PC-9 (cell line): ENCODE measurements at regions of chr2 and their contacts with region 1.

Region 1: GRCh38 chr2:96509114-96509846 is 4.1 kb upstream of the NEURL3 start:
- DNase-seq: peak; percentile 82 to 94
- H3K4me3 ChIP-seq: no peak overlapping the region
- H3K27ac ChIP-seq: no peak overlapping the region
- H3K4me1 ChIP-seq: peaks cover 40% of the 10 kb centered on the region
- H3K27me3 ChIP-seq: no peaks in the 10 kb centered on the region
- CTCF ChIP-seq: peak; percentile 100

Region 2: GRCh38 chr2:96208143-96209010 is 300.9 kb before region 1 on chr2 and contains the start of gene STARD7:
- CTCF ChIA-PET with region 1: no interaction called
- POLR2A ChIA-PET with region 1: no interaction called
- intact Hi-C with region 1: loop called (anchors 10 kb)
- DNase-seq: peak; percentile 96 to 99
- H3K4me3 ChIP-seq: peak within 1 kb of the TSS; percentile 87
- H3K27ac ChIP-seq: peak within 1 kb of the TSS; percentile 72
- H3K4me1 ChIP-seq: peaks cover 36% of the 10 kb centered on the region
- H3K27me3 ChIP-seq: no peaks in the 10 kb centered on the region
- CTCF ChIP-seq: peak; percentile 47; the same call in 1 of the 2 replicates
- total RNA-seq, gene STARD7: 171 and 189 TPM in 2 replicates

Region 3: GRCh38 chr2:96359310-96359709 is 150.0 kb before region 1 on chr2:
- CTCF ChIA-PET with region 1: interaction called, 4 read pairs
- POLR2A ChIA-PET with region 1: no interaction called
- intact Hi-C with region 1: loop called (anchors 1 kb)
- DNase-seq: peak in 1 of 2 experiments; percentile 35
- H3K4me3 ChIP-seq: no peak overlapping the region
- H3K27ac ChIP-seq: no peak overlapping the region
- H3K4me1 ChIP-seq: no peaks in the 10 kb centered on the region
- H3K27me3 ChIP-seq: no peaks in the 10 kb centered on the region
- CTCF ChIP-seq: peak; percentile 61

Region 4: DNA sequence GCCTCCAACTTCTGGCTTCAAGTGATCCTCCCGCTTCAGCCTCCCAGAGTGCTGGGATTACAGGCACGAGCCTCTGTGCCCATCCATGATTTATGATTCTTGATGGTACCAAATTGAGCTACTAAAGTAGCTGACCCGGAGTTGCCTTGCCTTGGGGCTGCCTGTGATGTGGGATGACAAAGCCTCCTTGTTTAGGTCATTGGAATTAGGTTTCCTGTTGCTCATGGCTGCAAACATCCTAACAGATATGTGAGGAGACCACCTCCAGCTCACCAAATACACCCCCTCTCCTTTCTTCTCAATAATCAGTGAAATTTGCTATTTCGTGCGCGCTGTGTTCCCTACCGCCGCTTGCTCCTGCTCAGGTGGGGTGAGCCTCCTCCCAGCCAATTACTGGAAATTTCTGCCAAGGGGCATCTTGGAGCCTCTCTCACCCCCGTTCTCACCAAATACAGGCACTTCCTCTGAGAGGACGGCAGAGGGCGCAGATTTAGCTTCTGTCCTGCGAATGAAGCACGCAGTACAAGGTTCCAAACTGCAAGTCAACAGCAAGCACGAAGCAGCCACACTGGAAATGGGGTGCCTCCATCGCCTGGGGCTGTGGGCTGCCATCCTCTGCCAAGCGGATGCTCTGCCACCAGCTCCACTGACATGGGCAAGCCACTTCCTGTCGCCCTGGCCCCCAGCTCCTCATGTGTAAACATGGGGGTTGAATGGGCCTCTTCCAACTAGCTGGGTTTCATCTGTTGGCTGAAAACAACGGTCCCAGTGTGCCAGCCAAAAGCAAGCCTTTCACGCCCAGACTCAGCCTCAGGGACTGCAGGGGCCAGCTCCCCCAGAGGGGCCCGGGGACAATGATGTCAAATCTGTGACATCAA is 102.0 kb before region 1 on chr2:
- CTCF ChIA-PET with region 1: interaction called, 35 read pairs
- POLR2A ChIA-PET with region 1: no interaction called
- intact Hi-C with region 1: loop called (anchors 1 kb)
- DNase-seq: peak; percentile 59 to 71
- H3K4me3 ChIP-seq: no peak overlapping the region
- H3K27ac ChIP-seq: no peak overlapping the region; the same call in 1 of the 2 replicates
- H3K4me1 ChIP-seq: peaks cover 49% of the 10 kb centered on the region
- H3K27me3 ChIP-seq: no peaks in the 10 kb centered on the region
- CTCF ChIP-seq: peak; percentile 95

Region 5: GRCh38 chr2:96493072-96493471 is 16.2 kb before region 1 on chr2:
- CTCF ChIA-PET with region 1: interaction called, 10 read pairs
- POLR2A ChIA-PET with region 1: interaction called, 6 read pairs
- intact Hi-C with region 1: loop called (anchors 1 kb)
- DNase-seq: peak; percentile 88 to 99
- H3K4me3 ChIP-seq: peak overlapping the region; percentile 2; the same call in 1 of the 2 replicates
- H3K27ac ChIP-seq: peak overlapping the region; percentile 71
- H3K4me1 ChIP-seq: peaks cover 18% of the 10 kb centered on the region
- H3K27me3 ChIP-seq: no peaks in the 10 kb centered on the region
- CTCF ChIP-seq: no peak

Region 6: DNA sequence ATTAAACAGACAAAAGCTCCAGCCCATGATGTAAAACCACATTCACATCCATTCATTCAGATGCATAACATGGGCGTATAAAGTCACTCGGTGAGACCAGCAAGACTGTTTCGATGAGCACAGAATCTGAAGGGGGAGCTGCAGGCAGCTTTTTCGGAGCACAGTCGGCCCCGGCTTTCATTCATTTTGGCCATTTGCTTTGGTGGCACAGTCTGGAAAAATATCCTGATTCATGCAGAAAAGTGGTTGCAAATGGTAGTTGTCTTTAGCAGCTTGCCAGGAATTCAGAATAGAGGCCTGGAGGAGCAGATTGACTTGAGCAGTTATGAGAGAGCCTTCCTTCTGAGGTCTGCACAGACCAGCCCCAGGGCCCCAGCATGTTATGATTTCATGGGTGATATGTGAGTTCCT is 38.5 kb after region 1 on chr2:
- CTCF ChIA-PET with region 1: no interaction called
- POLR2A ChIA-PET with region 1: no interaction called
- intact Hi-C with region 1: no loop called
- DNase-seq: no peak
- H3K4me3 ChIP-seq: no peak overlapping the region
- H3K27ac ChIP-seq: no peak overlapping the region
- H3K4me1 ChIP-seq: no peaks in the 10 kb centered on the region
- H3K27me3 ChIP-seq: no peaks in the 10 kb centered on the region
- CTCF ChIP-seq: no peak

Region 7: GRCh38 chr2:96679848-96680247 is 170.6 kb after region 1 on chr2:
- CTCF ChIA-PET with region 1: no interaction called
- POLR2A ChIA-PET with region 1: no interaction called
- intact Hi-C with region 1: no loop called
- DNase-seq: no peak
- H3K4me3 ChIP-seq: no peak overlapping the region
- H3K27ac ChIP-seq: no peak overlapping the region
- H3K4me1 ChIP-seq: no peaks in the 10 kb centered on the region
- H3K27me3 ChIP-seq: no peaks in the 10 kb centered on the region
- CTCF ChIP-seq: no peak